Caco-2 (cell line): ENCODE measurements at regions of chr2 and their contacts with region 1.

Region 1: GRCh38 chr2:174051741-174052583 is 86.8 kb upstream of the SP3 start:
- DNase-seq: peak; percentile 92 to 94
- H3K4me3 ChIP-seq: peak overlapping the region; percentile 1
- H3K4me3 Mint-ChIP-seq: peak overlapping the region; percentile 77
- H3K27ac Mint-ChIP-seq: peak overlapping the region; percentile 90
- H3K4me1 ChIP-seq: peaks cover 40% of the 10 kb centered on the region
- H3K4me1 Mint-ChIP-seq: peaks cover 34% of the 10 kb centered on the region
- H3K27me3 ChIP-seq: no peaks in the 10 kb centered on the region
- H3K27me3 Mint-ChIP-seq: no peaks in the 10 kb centered on the region
- CTCF ChIP-seq: no peak

Region 2: GRCh38 chr2:173311844-173312606 is 739.9 kb before region 1 on chr2:
- CTCF ChIA-PET with region 1: no interaction called
- POLR2A ChIA-PET with region 1: no interaction called
- intact Hi-C with region 1: no loop called
- DNase-seq: no peak
- H3K4me3 ChIP-seq: no peak overlapping the region
- H3K4me3 Mint-ChIP-seq: no peak overlapping the region
- H3K27ac Mint-ChIP-seq: no peak overlapping the region
- H3K4me1 ChIP-seq: no peaks in the 10 kb centered on the region
- H3K4me1 Mint-ChIP-seq: peaks cover 4% of the 10 kb centered on the region
- H3K27me3 ChIP-seq: no peaks in the 10 kb centered on the region
- H3K27me3 Mint-ChIP-seq: no peaks in the 10 kb centered on the region
- CTCF ChIP-seq: no peak

Region 3: DNA sequence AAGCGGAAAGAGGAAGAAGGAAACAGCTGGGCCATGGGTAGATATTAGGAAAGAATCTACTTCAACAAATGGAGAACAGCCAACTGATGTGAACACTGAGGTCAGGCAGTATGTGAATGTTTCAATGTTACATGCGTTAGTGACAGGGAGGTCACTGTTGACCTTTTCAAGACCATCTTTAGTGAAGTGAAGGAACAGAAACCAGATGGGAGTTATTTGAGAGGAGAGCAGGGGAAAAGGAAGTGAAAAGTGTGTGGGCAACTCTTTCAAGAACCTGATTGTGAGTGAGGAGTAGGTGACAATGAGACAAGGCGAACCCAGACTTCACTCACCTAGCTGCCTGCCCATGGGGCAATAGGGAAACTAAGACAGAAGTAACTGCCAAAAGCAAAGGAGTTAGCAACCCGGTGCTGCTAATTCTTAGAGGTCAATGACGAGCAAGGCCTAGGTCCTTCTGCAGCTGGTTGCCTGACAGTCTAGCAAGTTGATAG is 153.7 kb before region 1 on chr2:
- CTCF ChIA-PET with region 1: no interaction called
- POLR2A ChIA-PET with region 1: no interaction called
- intact Hi-C with region 1: loop called (anchors 5 kb)
- DNase-seq: no peak
- H3K4me3 ChIP-seq: no peak overlapping the region
- H3K4me3 Mint-ChIP-seq: no peak overlapping the region
- H3K27ac Mint-ChIP-seq: no peak overlapping the region
- H3K4me1 ChIP-seq: 0 out of 2 replicates have a peak, but pooled peaks cover 4% of the 10 kb centered on the region
- H3K4me1 Mint-ChIP-seq: peaks cover 6% of the 10 kb centered on the region
- H3K27me3 ChIP-seq: no peaks in the 10 kb centered on the region
- H3K27me3 Mint-ChIP-seq: no peaks in the 10 kb centered on the region
- CTCF ChIP-seq: no peak

Region 4: GRCh38 chr2:174033166-174033555 is 18.8 kb before region 1 on chr2:
- CTCF ChIA-PET with region 1: no interaction called
- POLR2A ChIA-PET with region 1: no interaction called
- intact Hi-C with region 1: loop called (anchors 2 kb)
- DNase-seq: no peak
- H3K4me3 ChIP-seq: no peak overlapping the region
- H3K4me3 Mint-ChIP-seq: peak overlapping the region; percentile 60
- H3K27ac Mint-ChIP-seq: peak overlapping the region; percentile 97
- H3K4me1 ChIP-seq: peaks cover 60% of the 10 kb centered on the region
- H3K4me1 Mint-ChIP-seq: peaks cover 69% of the 10 kb centered on the region
- H3K27me3 ChIP-seq: no peaks in the 10 kb centered on the region
- H3K27me3 Mint-ChIP-seq: no peaks in the 10 kb centered on the region
- CTCF ChIP-seq: no peak

Region 5: DNA sequence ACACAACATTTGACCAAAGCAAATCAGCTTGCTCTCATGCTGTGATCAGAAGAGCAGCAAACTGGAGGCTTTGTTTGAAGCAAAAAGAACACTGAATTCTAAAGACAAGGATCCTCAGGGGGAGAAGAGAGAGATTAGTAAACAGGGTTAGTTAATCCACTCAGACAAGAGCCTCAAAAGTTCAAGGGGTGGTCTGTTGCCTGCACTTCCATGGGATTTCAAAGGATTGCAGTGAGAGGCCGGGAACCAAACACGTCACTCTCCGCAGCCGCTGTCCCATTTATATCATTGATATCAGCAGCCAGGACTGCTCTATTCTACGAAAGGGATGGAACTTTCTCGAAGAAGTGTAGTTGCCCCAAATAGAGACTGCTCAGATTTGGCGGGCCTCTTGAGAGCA is 11.0 kb after region 1 on chr2:
- CTCF ChIA-PET with region 1: interaction called, 6 read pairs
- POLR2A ChIA-PET with region 1: no interaction called
- intact Hi-C with region 1: loop called (anchors 1 kb)
- DNase-seq: no peak
- H3K4me3 ChIP-seq: no peak overlapping the region
- H3K4me3 Mint-ChIP-seq: no peak overlapping the region
- H3K27ac Mint-ChIP-seq: peak overlapping the region; percentile 48
- H3K4me1 ChIP-seq: peaks cover 10% of the 10 kb centered on the region
- H3K4me1 Mint-ChIP-seq: peaks cover 44% of the 10 kb centered on the region
- H3K27me3 ChIP-seq: no peaks in the 10 kb centered on the region
- H3K27me3 Mint-ChIP-seq: no peaks in the 10 kb centered on the region
- CTCF ChIP-seq: no peak

Region 6: DNA sequence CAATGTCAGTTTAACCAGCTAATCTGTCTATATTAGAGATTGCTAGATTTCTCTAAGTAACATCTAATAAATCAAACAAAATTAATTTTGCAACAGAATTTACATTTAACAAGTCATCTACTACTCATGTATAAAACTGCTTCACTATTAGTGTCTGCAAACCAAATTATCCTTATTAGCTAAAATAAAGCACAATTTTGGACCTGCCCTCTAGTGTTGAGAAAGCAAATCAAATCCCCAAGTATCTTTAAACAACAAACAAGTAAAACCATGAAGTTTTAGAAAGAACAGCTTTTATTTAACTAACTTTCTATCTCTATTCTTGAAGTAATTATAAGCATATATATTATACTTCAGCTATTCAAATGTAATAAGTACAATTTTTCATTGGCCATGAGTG is 26.3 kb after region 1 on chr2:
- CTCF ChIA-PET with region 1: interaction called, 5 read pairs
- POLR2A ChIA-PET with region 1: interaction called, 3 read pairs
- intact Hi-C with region 1: loop called (anchors 1 kb)
- DNase-seq: no peak
- H3K4me3 ChIP-seq: no peak overlapping the region
- H3K4me3 Mint-ChIP-seq: no peak overlapping the region
- H3K27ac Mint-ChIP-seq: peak overlapping the region; percentile 21
- H3K4me1 ChIP-seq: peaks cover 43% of the 10 kb centered on the region
- H3K4me1 Mint-ChIP-seq: peaks cover 40% of the 10 kb centered on the region
- H3K27me3 ChIP-seq: no peaks in the 10 kb centered on the region
- H3K27me3 Mint-ChIP-seq: no peaks in the 10 kb centered on the region
- CTCF ChIP-seq: peak in 1 of 2 experiments; percentile 36